ENCODE measurements at regions of chr10 and their contacts with region 1.

Region 1: GRCh38 chr10:5665373-5666007 is 905 bp downstream of the ASB13 start:
- DNase-seq: no peak
- H3K4me3 ChIP-seq: peak overlapping the region; percentile 85
- H3K27ac ChIP-seq: peak overlapping the region; percentile 50 to 90
- H3K4me1 ChIP-seq: peaks cover 17% of the 10 kb centered on the region
- H3K27me3 ChIP-seq: no peaks in the 10 kb centered on the region
- CTCF ChIP-seq: no peak
- EP300 ChIP-seq: no peak
- POLR2A ChIP-seq: no peak

Region 2: DNA sequence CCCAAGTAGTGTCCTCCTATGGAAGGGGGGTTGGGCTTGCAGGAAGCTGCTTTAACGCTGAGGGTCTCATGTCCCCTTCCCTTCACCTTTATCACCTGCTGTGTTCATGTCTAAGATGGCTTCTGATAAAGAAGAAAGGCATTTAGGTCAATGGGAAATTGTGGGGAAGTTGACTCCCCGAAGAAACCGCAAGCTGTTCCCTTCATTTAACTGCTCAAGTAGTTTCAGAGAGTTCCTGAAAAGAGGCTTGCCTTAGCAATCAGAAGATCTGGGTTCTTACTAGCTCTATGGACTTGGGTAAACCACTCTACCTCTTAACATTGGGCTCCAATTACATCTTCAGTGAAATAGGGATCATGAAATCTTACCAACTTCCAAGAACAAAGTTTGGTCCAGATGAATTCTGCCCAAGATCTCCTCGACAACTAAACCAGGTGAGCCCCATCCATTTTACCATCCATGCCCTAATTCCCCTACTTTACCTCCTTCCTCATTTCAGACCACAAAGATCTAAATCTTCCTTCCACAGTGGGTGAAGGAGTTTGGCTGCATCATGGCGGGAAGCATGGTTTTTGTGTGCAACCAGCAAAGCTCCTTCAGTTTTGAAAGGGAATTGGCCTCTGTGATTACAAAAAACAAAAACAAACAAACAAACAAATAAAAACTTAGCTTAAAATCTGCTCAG is 331.2 kb before region 1 on chr10:
- intact Hi-C with region 1: no loop called
- DNase-seq: no peak
- H3K4me3 ChIP-seq: no peak overlapping the region
- H3K27ac ChIP-seq: no peak overlapping the region
- H3K4me1 ChIP-seq: no peaks in the 10 kb centered on the region
- H3K27me3 ChIP-seq: no peaks in the 10 kb centered on the region
- CTCF ChIP-seq: no peak
- EP300 ChIP-seq: no peak
- POLR2A ChIP-seq: no peak

Region 3: DNA sequence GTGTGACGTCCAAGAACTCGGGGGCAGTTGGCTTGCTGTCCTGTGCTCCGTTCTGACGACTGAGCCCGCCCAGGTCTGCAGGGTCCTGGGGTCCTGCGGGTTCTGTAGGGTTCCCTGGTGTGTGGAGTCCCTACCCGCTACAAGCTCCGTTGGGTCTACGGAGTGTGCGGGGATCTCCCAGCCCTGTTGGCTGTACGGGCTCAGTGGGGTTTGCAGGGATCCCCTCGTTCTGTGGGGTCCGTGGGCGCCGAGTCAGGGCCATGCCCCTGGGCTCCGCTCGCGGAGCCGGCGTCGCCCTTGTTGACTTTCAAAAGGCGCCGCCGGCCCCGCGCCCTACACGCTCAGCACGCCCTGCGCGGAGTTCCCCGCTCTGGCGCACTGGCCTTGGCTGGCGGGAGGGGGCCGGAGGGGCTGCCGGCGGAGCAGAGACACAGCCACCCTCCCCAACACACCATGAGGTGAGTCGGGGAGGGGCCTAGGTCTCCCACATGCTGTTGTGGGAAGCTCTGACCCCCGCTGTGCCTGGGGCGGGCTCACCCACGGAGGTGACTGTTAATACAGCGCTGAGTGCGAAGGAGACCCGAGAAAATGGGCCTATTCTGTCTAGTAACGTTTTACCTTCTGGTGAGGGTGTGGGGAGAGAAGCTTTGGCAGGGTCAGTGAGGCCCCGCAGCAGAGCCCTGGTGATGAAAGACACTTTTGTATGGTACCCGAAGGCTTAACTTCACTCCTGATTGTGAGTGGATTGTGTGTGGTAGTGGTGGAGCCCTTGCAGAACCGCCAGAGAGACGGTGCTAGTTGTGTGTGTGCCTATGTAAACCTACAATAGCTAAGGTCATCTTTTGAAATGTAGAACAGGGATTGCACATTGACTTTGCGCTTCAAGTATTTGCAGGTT is 27.2 kb after region 1 on chr10:
- intact Hi-C with region 1: loop called in 1 of 4 experiments (anchors 2 kb)
- DNase-seq: peak; percentile 47 to 78 (median 54)
- H3K4me3 ChIP-seq: peak overlapping the region; percentile 46
- H3K27ac ChIP-seq: no peak overlapping the region
- H3K4me1 ChIP-seq: peaks cover 5% of the 10 kb centered on the region
- H3K27me3 ChIP-seq: no peaks in the 10 kb centered on the region
- CTCF ChIP-seq: no peak
- EP300 ChIP-seq: no peak
- POLR2A ChIP-seq: no peak